H1 (cell line): ENCODE measurements at regions of chr11 and their contacts with region 1.

Region 1: DNA sequence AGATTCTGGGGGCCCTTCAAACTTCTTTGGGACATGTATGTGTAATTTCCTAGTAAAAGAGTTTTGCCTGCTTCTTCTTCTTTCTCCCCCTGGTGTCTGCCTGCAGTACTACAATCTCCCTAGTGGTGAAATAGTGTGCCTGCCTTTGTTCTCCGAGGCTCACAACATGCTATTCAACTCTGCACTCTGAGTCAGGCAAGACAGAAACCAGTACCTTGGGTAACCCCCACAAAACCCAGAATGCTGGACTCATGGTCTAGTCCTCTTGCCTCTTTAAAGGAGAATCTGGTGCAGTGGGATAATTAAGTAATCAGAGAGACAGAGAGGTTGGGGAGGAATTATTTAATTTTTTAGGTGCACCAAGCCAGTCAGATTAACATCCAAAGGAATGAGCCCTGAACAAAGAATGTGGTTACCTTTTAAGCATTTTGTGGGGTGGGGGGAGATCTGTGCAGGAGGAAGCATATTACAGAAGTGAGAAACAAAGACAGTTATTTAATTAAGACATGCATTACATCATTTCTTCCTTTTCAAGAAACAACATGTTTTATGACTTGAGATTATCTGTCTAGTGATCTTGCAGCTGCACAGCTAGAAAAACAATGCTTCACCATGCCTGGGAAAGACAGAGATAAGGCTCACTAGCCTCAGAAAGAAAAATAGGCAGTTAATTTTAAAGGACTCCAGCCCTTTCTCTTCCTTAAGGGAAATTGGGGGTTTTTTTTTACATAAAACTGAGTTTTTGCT is 11.0 kb upstream of the MS4A6A start:
- DNase-seq: peak; percentile 29 to 89
- H3K4me3 ChIP-seq: no peak overlapping the region
- H3K27ac ChIP-seq: no peak overlapping the region
- H3K4me1 ChIP-seq: no peaks in the 10 kb centered on the region; a peak in 1 of 7 replicates
- H3K27me3 ChIP-seq: no peaks in the 10 kb centered on the region
- CTCF ChIP-seq: peak; percentile 4 to 99 (median 88)
- EP300 ChIP-seq: no peak
- POLR2A ChIP-seq: no peak
- RAD21 ChIP-seq: peak; percentile 51 to 58

Region 2: GRCh38 chr11:60182541-60183330 is 11.1 kb before region 1 on chr11 and contains the start of gene MS4A6A:
- CTCF ChIA-PET with region 1: interaction called, 18 read pairs
- POLR2A ChIA-PET with region 1: no interaction called
- DNase-seq: no peak
- H3K4me3 ChIP-seq: no peak within 1 kb of the TSS
- H3K27ac ChIP-seq: no peak within 1 kb of the TSS
- H3K4me1 ChIP-seq: 0 out of 7 replicates have a peak, but pooled peaks cover 0 to 2% (median 0%) of the 10 kb centered on the region in 4 experiments
- H3K27me3 ChIP-seq: no peaks in the 10 kb centered on the region
- CTCF ChIP-seq: no peak
- EP300 ChIP-seq: no peak
- POLR2A ChIP-seq: no peak
- RAD21 ChIP-seq: no peak
- total RNA-seq, gene MS4A6A: not detected in 2 replicates